K562 (cell line): ENCODE measurements at regions of chr1 and their contacts with region 1.

Region 1: GRCh38 chr1:23567996-23568607 is 8.8 kb upstream of the ID3 start:
- DNase-seq: peak in 3 of 4 experiments; percentile 62 to 80 (median 79)
- ATAC-seq: peak; percentile 81
- H3K4me3 ChIP-seq: peak overlapping the region; percentile 52
- H3K27ac ChIP-seq: peak overlapping the region; percentile 64; the same call in 2 of the 3 replicates
- H3K4me1 ChIP-seq: peaks cover 28 to 31% of the 10 kb centered on the region in 2 experiments
- H3K27me3 ChIP-seq: no peaks in the 10 kb centered on the region
- CTCF ChIP-seq: no peak
- EP300 ChIP-seq: no peak
- POLR2A ChIP-seq: no peak
- RAD21 ChIP-seq: no peak

Region 2: GRCh38 chr1:23485002-23485332 is 83.1 kb before region 1 on chr1:
- CTCF ChIA-PET with region 1: no interaction called
- POLR2A ChIA-PET with region 1: no interaction called
- in situ Hi-C with region 1: no loop called
- intact Hi-C with region 1: no loop called
- DNase-seq: peak in 1 of 4 experiments; percentile 40
- ATAC-seq: no peak
- H3K4me3 ChIP-seq: peak overlapping the region; percentile 68
- H3K27ac ChIP-seq: peak overlapping the region; percentile 38; the same call in 2 of the 3 replicates
- H3K4me1 ChIP-seq: peaks cover 32 to 34% of the 10 kb centered on the region in 2 experiments
- H3K27me3 ChIP-seq: no peaks in the 10 kb centered on the region
- CTCF ChIP-seq: no peak
- EP300 ChIP-seq: no peak
- POLR2A ChIP-seq: no peak; the same call in 1 of the 2 replicates
- RAD21 ChIP-seq: no peak

Region 3: GRCh38 chr1:23548704-23549143 is 19.4 kb before region 1 on chr1:
- CTCF ChIA-PET with region 1: no interaction called
- POLR2A ChIA-PET with region 1: interaction called, 3 read pairs
- in situ Hi-C with region 1: no loop called
- intact Hi-C with region 1: loop called (anchors 2 kb)
- DNase-seq: peak in 1 of 4 experiments; percentile 57
- ATAC-seq: no peak; the same call in 1 of the 3 replicates
- H3K4me3 ChIP-seq: no peak overlapping the region
- H3K27ac ChIP-seq: no peak overlapping the region; the same call in 2 of the 3 replicates
- H3K4me1 ChIP-seq: peaks cover 8 to 23% of the 10 kb centered on the region in 2 experiments
- H3K27me3 ChIP-seq: no peaks in the 10 kb centered on the region
- CTCF ChIP-seq: no peak
- EP300 ChIP-seq: no peak
- POLR2A ChIP-seq: no peak
- RAD21 ChIP-seq: no peak